H1 (cell line): ENCODE measurements at regions of chr18 and their contacts with region 1.

Region 1: GRCh38 chr18:80119111-80119510 is 10.0 kb downstream of the ADNP2 start:
- DNase-seq: no peak
- H3K4me3 ChIP-seq: peak overlapping the region in 1 of 4 experiments; percentile 26; a peak in 2 of 8 replicates
- H3K27ac ChIP-seq: no peak overlapping the region
- H3K4me1 ChIP-seq: peaks cover 0 to 15% (median 8%) of the 10 kb centered on the region in 4 experiments; a peak in 5 of 7 replicates
- H3K27me3 ChIP-seq: no peaks in the 10 kb centered on the region
- CTCF ChIP-seq: no peak
- EP300 ChIP-seq: 0 out of 3 replicates have a peak, but pooled peaks of 1 of the 2 experiments have one; percentile 12
- POLR2A ChIP-seq: no peak
- RAD21 ChIP-seq: no peak

Region 2: DNA sequence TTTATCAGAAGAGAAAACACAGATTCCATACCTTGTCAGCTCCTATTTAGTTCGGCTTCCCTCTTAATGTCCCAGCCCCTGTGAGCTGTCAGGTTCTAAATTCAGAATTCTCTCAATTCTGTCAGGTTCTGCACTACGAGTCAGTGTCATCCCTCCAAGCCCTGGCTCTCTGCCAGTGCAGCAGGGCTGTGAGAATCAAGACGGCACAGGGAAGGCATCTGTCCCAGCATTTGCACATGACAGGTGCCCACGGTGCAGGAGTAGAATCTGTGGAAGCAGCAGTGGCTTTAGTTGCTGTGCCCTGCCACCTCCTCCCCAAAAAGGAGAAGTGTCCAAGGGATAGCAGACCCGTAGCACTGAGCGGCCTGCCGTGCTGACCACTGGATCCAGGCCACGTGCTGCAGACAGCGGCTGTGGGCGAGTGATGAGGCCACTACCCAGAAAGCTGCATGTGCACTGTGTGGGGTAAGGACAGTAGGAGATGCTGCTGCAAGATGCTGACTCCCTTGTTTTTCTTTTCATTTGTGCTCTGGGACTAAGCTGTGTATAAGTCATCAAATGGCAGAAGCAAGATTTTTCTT is 72.1 kb before region 1 on chr18:
- CTCF ChIA-PET with region 1: no interaction called
- POLR2A ChIA-PET with region 1: no interaction called
- DNase-seq: no peak
- H3K4me3 ChIP-seq: no peak overlapping the region
- H3K27ac ChIP-seq: no peak overlapping the region
- H3K4me1 ChIP-seq: no peaks in the 10 kb centered on the region
- H3K27me3 ChIP-seq: no peaks in the 10 kb centered on the region
- CTCF ChIP-seq: no peak
- EP300 ChIP-seq: no peak
- POLR2A ChIP-seq: no peak
- RAD21 ChIP-seq: no peak

Region 3: GRCh38 chr18:80096032-80096565 is 23.0 kb before region 1 on chr18:
- CTCF ChIA-PET with region 1: no interaction called
- POLR2A ChIA-PET with region 1: no interaction called
- DNase-seq: no peak
- H3K4me3 ChIP-seq: no peak overlapping the region
- H3K27ac ChIP-seq: no peak overlapping the region
- H3K4me1 ChIP-seq: no peaks in the 10 kb centered on the region
- H3K27me3 ChIP-seq: no peaks in the 10 kb centered on the region; a peak in 1 of 7 replicates
- CTCF ChIP-seq: no peak
- EP300 ChIP-seq: no peak
- POLR2A ChIP-seq: no peak
- RAD21 ChIP-seq: no peak

Region 4: GRCh38 chr18:80130555-80130954 is 11.4 kb after region 1 on chr18:
- CTCF ChIA-PET with region 1: interaction called, 3 read pairs
- POLR2A ChIA-PET with region 1: interaction called, 10 read pairs
- DNase-seq: no peak
- H3K4me3 ChIP-seq: no peak overlapping the region
- H3K27ac ChIP-seq: no peak overlapping the region
- H3K4me1 ChIP-seq: peaks cover 3 to 6% (median 5%) of the 10 kb centered on the region in 4 experiments; a peak in 6 of 7 replicates
- H3K27me3 ChIP-seq: no peaks in the 10 kb centered on the region
- CTCF ChIP-seq: no peak
- EP300 ChIP-seq: no peak
- POLR2A ChIP-seq: no peak
- RAD21 ChIP-seq: no peak